GM12878 (cell line): ENCODE measurements at regions of chr1 and their contacts with region 1.

Region 1: DNA sequence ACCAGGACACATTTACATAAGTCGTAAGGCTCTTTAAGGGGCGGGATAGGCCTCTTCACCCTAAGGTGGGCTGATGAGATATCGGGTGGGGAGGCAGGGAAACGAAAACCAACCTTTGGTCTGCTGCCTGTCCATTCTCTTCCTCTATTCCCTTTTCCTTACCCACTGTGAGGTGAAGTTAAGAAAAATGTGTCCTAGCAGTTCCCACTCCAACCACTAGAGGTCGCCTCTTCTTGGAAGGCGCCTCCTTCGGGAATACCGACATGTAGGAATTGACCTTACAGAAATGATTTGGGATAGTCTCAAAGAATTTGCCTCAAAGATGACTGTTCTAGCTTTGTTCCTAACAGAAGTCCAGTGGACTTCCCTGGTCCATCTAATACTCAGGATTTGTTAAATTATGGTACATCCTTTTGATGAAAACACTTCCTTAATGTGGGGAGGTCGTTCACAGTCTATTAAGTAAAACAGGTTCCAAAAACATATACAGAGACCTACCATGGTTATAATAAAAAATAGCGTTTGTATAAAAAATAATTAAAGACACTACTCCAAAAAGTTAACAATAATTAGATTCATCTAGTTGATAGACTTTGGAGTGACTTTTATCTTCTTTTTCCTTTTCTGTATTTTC is 14.1 kb downstream of the AZIN2 start:
- DNase-seq: no peak
- ATAC-seq: no peak
- H3K4me3 ChIP-seq: no peak overlapping the region
- H3K27ac ChIP-seq: no peak overlapping the region
- H3K4me1 ChIP-seq: peaks cover 6% of the 10 kb centered on the region; the same call in 1 of the 2 replicates
- H3K27me3 ChIP-seq: no peaks in the 10 kb centered on the region
- CTCF ChIP-seq: peak; percentile 83 to 99 (median 96)
- EP300 ChIP-seq: no peak
- POLR2A ChIP-seq: no peak
- RAD21 ChIP-seq: peak; percentile 49

Region 2: GRCh38 chr1:32724678-32725614 is 370.1 kb before region 1 on chr1:
- CTCF ChIA-PET with region 1: no interaction called
- POLR2A ChIA-PET with region 1: no interaction called
- RAD21 ChIA-PET with region 1: no interaction called
- SMC1A ChIA-PET with region 1: no interaction called
- in situ Hi-C with region 1: no loop called
- intact Hi-C with region 1: no loop called
- DNase-seq: no peak
- ATAC-seq: peak; percentile 44
- H3K4me3 ChIP-seq: no peak overlapping the region
- H3K27ac ChIP-seq: no peak overlapping the region
- H3K4me1 ChIP-seq: peaks cover 8% of the 10 kb centered on the region
- H3K27me3 ChIP-seq: peaks cover 0 to 1% of the 10 kb centered on the region in 2 experiments; a peak in 1 of 4 replicates
- CTCF ChIP-seq: no peak
- EP300 ChIP-seq: no peak
- POLR2A ChIP-seq: no peak
- RAD21 ChIP-seq: no peak

Region 3: GRCh38 chr1:33050221-33051076 is 44.6 kb before region 1 on chr1:
- CTCF ChIA-PET with region 1: no interaction called
- POLR2A ChIA-PET with region 1: no interaction called
- RAD21 ChIA-PET with region 1: no interaction called
- SMC1A ChIA-PET with region 1: no interaction called
- in situ Hi-C with region 1: no loop called
- intact Hi-C with region 1: no loop called
- DNase-seq: no peak
- ATAC-seq: no peak
- H3K4me3 ChIP-seq: no peak overlapping the region
- H3K27ac ChIP-seq: no peak overlapping the region
- H3K4me1 ChIP-seq: no peaks in the 10 kb centered on the region
- H3K27me3 ChIP-seq: no peaks in the 10 kb centered on the region
- CTCF ChIP-seq: no peak
- EP300 ChIP-seq: no peak
- POLR2A ChIP-seq: no peak
- RAD21 ChIP-seq: no peak

Region 4: DNA sequence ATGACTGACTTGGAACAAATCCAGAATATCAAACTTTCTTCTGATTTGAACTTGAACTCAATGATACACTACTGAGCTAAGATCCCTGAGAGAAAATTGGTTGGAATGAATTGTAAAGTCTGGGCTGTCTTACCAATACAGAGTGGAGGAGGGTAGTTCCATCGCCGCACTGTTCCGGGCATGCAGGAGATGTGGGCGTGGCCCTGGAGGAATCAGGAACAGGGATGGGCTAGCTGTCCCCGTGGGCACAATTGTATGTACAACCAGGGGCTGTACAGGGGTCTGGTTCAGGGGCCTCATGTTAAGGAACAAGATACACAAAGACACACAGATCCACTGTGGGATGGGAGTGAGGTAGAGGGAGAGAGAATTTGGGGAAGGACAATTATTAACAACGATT is 521.7 kb after region 1 on chr1:
- CTCF ChIA-PET with region 1: interaction called, 12 read pairs
- POLR2A ChIA-PET with region 1: no interaction called
- RAD21 ChIA-PET with region 1: no interaction called
- SMC1A ChIA-PET with region 1: interaction called, 3 read pairs
- in situ Hi-C with region 1: no loop called
- intact Hi-C with region 1: loop called (anchors 10 kb)
- DNase-seq: no peak
- ATAC-seq: no peak
- H3K4me3 ChIP-seq: no peak overlapping the region
- H3K27ac ChIP-seq: no peak overlapping the region
- H3K4me1 ChIP-seq: no peaks in the 10 kb centered on the region
- H3K27me3 ChIP-seq: peaks cover 2 to 3% of the 10 kb centered on the region in 2 experiments; a peak in 3 of 4 replicates
- CTCF ChIP-seq: no peak
- EP300 ChIP-seq: no peak
- POLR2A ChIP-seq: no peak
- RAD21 ChIP-seq: no peak